ENCODE measurements at regions of chr20 and their contacts with region 1.

Region 1: GRCh38 chr20:25065625-25066338 is 7.8 kb upstream of the ACSS1 start:
- DNase-seq: peak; percentile 74
- CTCF ChIP-seq: peak; percentile 70

Region 2: GRCh38 chr20:24955045-24955444 is 110.7 kb before region 1 on chr20:
- CTCF ChIA-PET with region 1: no interaction called
- POLR2A ChIA-PET with region 1: no interaction called
- DNase-seq: peak; percentile 49
- CTCF ChIP-seq: no peak

Region 3: DNA sequence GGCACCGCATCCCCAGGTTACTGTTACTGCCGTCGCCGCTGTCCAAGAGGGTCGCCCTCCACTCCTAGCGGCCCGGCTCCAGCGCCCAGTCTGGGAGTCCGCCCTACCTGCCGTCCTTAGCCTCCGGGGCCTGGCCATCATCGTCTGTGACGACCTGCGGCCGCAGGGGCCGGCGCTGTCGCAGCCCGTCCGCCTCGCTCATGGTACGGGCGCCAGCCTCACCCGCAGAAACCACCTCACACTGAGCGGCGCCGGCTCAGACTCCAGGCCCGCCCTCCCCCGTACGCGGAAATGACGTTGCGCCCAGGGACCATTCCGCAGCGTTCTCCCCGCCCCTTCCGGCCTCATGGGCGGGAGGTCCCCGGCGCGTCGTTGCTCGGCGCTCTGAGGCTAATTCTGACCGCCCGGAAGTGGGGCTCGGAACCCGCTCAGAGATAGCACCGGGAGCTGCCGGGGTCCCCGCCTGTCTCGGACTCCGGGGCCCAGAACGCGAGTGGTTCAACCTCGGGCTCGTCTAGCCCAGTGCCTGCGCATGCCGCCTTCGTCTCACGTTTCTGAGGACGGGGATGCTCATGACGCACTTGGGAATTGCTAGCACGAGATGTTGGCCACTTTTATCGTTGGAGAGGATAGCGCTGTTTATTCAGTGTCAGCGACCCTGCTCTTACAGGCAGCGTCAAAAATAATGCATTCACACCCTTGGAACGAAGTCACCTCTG is 73.1 kb before region 1 on chr20 and contains the start of gene APMAP:
- CTCF ChIA-PET with region 1: interaction called, 201 read pairs
- POLR2A ChIA-PET with region 1: interaction called, 3 read pairs
- DNase-seq: peak; percentile 98
- CTCF ChIP-seq: no peak

Region 4: GRCh38 chr20:25000268-25000821 is 65.4 kb before region 1 on chr20:
- CTCF ChIA-PET with region 1: interaction called, 201 read pairs
- POLR2A ChIA-PET with region 1: no interaction called
- DNase-seq: no peak
- CTCF ChIP-seq: no peak

Region 5: GRCh38 chr20:25039396-25040115 is 26.2 kb before region 1 on chr20:
- CTCF ChIA-PET with region 1: interaction called, 26 read pairs
- POLR2A ChIA-PET with region 1: no interaction called
- DNase-seq: no peak
- CTCF ChIP-seq: no peak

Region 6: GRCh38 chr20:25053073-25054031 is 12.4 kb before region 1 on chr20:
- CTCF ChIA-PET with region 1: interaction called, 10 read pairs
- POLR2A ChIA-PET with region 1: no interaction called
- DNase-seq: no peak
- CTCF ChIP-seq: no peak

Measured in GM10248 (cell line).